ENCODE measurements at regions of chr13 and their contacts with region 1.

Region 1: GRCh38 chr13:86174622-86175021 is 375.4 kb upstream of the SLITRK6 start:
- DNase-seq: no peak
- ATAC-seq: no peak

Region 2: GRCh38 chr13:85772379-85772778 is 402.2 kb before region 1 on chr13:
- intact Hi-C with region 1: loop called (anchors 5 kb)
- DNase-seq: no peak
- ATAC-seq: no peak